ENCODE measurements at regions of chr19 and their contacts with region 1.

Region 1: GRCh38 chr19:49546825-49547565 is 19.2 kb downstream of the RCN3 start:
- DNase-seq: peak; percentile 73 to 74
- ATAC-seq: peak; percentile 75

Region 2: DNA sequence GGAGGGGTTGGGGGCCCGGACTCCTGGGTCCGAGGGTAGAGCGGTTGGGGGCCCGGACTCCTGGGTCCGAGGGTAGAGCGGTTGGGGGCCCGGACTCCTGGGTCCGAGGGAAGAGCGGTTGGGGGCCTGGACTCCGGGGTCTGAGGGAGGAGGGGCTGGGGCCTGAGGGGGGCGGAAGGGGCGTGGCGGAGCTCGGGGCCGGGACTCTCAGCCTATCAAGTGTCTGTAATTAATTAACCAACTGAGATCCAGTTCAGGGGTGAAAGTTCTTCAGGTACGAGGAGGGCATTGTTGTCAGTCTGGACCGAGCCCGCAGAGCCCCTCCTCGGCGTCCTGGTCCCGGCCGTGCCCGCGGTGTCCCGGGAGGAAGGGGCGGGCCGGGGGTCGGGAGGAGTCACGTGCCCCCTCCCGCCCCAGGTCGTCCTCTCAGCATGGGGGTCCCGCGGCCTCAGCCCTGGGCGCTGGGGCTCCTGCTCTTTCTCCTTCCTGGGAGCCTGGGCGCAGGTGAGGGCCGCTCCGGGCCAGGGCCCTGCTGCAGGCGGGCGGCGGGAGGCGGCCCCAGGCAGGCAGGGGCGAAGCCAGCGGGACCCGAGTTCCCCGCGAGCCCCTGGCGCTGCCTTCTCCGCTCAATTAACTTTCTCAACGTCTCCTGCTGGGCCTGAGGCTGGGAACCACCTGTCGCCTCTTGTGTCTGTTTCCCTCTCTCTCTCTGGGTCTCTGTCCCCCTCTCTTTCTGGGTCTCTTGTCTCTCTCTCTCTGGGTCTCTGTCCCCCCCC is 33.8 kb before region 1 on chr19:
- intact Hi-C with region 1: loop called in 1 of 2 experiments (anchors 2 kb)
- DNase-seq: peak; percentile 67 to 82
- ATAC-seq: peak; percentile 83